Activated CD4-positive, alpha-beta T cell treated with anti-CD3 and anti-CD28 coated beads, Interleukin-2, amount 10 ng/mL, durations not matched to agents 7 days and 5 days (primary cell): ENCODE measurements at regions of chr9 and their contacts with region 1.

Region 1: DNA sequence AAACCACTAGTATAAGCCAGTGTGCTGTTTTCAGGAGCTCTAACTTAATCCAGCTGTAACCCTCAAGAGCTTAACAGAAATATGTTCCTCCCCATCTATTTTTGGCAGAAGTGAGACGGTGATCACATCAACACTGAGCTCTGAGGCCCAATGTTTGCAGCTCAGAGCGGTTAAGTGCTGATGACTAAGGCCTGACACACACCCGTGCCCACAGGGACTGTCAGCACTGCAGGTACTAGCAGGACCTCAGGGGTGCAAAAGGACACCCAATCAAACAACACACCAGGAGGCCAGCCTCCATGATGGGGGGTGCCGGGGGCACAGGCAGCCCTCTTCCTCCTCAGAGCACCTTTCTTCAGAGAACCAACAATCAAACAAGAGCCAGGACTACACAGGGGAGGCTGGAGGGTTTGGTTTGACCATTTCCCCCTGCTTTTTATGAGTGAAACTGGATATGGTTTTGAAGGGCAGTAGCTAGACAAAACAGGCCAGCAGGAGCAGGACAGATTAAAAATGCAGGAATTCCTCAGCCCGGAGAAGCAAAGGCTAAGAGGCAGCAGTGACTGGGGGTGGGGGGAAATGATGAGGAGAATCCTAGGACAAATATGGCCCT is 61.3 kb downstream of the RAPGEF1 start:
- DNase-seq: peak; percentile 75
- H3K4me3 Mint-ChIP-seq: peak overlapping the region; percentile 7
- H3K27ac Mint-ChIP-seq: peak overlapping the region; percentile 92
- H3K4me1 Mint-ChIP-seq: peaks cover 84% of the 10 kb centered on the region
- H3K27me3 Mint-ChIP-seq: no peaks in the 10 kb centered on the region

Region 2: DNA sequence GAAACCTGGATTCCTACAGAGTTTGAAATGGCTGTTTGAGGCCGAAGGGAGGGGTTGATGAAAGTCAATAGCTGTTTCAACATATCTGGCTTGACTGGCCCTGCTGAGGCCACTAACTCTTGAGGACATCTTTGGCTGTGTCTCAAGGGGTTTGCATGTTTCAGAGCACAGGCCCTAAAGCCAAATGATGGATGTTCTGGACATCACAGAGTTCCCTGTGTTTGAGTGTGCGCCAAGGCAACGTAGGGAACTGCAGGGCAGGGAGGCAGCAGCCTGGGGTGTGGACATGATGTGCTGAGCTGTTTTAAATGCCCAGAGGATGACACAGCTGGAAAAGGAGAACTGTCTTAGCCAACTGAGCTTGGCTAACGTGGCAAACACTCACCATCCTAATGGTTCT is 28.4 kb before region 1 on chr9:
- CTCF ChIA-PET with region 1: no interaction called
- POLR2A ChIA-PET with region 1: no interaction called
- DNase-seq: no peak
- H3K4me3 Mint-ChIP-seq: no peak overlapping the region
- H3K27ac Mint-ChIP-seq: no peak overlapping the region
- H3K4me1 Mint-ChIP-seq: peaks cover 34% of the 10 kb centered on the region
- H3K27me3 Mint-ChIP-seq: no peaks in the 10 kb centered on the region

Region 3: DNA sequence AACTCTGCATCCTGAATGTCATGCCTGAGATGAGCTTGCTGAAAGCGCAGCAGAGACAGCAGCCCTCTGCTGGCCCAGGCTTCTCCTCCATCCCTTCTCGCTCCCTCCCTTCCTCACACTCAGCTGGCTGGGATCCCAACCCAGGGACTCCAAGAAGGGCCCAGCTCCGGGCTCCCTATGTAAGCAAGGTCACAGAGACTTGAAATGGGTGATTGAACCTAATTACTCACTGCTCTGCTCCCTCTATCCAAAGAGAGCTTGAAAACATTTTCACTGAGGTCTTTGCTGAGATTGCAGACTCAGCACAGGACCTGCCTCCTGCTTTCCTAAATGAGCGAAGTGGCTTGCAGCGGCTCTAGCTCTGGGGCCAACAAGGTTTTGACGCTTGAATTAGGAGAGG is 18.5 kb after region 1 on chr9:
- CTCF ChIA-PET with region 1: interaction called, 47 read pairs
- POLR2A ChIA-PET with region 1: interaction called, 3 read pairs
- DNase-seq: no peak
- H3K4me3 Mint-ChIP-seq: no peak overlapping the region
- H3K27ac Mint-ChIP-seq: no peak overlapping the region
- H3K4me1 Mint-ChIP-seq: peaks cover 74% of the 10 kb centered on the region
- H3K27me3 Mint-ChIP-seq: no peaks in the 10 kb centered on the region

Region 4: DNA sequence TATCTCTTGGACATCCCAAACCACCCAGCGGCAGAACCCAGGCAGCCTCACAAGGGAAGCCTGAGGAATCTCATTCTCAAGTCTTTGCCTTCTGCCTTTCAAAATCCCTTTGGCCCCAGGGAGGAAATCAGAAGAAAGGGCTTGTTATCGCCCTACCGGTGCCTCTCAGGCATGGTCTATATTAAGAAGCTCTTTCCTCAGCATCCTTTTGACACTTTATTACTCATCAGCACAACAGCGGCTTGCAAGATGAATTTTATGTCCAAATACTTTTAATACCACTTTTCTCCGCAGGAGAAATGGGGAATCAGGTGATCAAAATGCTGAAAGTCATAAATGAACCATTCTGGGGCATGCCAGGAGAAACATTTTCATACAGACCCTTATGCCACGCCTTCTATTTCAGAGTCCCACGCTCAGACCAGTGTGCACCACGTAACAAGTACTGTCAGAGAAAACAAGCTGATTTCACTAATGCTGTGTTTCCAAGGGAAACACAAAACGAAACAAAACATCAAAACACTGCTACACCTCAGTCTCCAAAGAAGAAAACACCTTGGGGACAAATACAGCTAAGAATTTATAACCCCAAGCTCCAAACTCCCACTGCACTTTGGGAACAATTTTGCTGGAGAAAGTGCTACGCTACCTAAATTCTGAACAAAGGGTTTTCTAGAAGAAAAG is 31.3 kb after region 1 on chr9:
- CTCF ChIA-PET with region 1: interaction called, 14 read pairs
- POLR2A ChIA-PET with region 1: interaction called, 5 read pairs
- DNase-seq: peak; percentile 50
- H3K4me3 Mint-ChIP-seq: peak overlapping the region; percentile 22
- H3K27ac Mint-ChIP-seq: peak overlapping the region; percentile 51
- H3K4me1 Mint-ChIP-seq: peaks cover 69% of the 10 kb centered on the region
- H3K27me3 Mint-ChIP-seq: no peaks in the 10 kb centered on the region

Region 5: DNA sequence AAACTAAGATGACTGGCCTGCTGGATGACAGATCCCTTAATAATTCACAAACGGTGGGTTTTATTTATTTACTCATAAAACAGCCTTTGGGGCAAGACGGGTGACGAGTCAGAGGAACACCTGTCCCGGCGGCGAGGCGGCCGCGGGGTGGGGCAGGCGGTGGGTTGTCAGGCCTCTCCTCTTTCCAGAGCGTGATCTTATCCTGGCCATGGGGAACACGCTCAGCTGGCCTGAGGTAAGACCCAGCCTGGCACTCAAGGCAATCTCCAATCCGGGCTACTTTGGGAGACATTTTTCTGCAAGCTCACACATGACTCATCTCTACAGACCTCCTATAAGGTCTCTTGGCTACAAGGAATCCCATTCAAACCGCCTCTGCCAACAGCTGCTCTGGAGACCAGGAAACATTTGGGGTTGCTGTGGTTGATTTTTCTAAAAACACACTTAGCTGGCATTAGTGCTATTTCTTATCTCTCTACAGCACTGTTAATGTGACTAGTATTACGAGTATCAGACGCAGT is 55.0 kb after region 1 on chr9:
- CTCF ChIA-PET with region 1: interaction called, 33 read pairs
- POLR2A ChIA-PET with region 1: interaction called, 5 read pairs
- DNase-seq: peak; percentile 34
- H3K4me3 Mint-ChIP-seq: peak overlapping the region; percentile 75
- H3K27ac Mint-ChIP-seq: peak overlapping the region; percentile 98
- H3K4me1 Mint-ChIP-seq: peaks cover 86% of the 10 kb centered on the region
- H3K27me3 Mint-ChIP-seq: no peaks in the 10 kb centered on the region